ENCODE measurements at regions of chr4 and their contacts with region 1.

Region 1: GRCh38 chr4:161629694-161630441 is 533.9 kb downstream of the FSTL5 start:
- DNase-seq: no peak
- H3K4me3 ChIP-seq: no peak overlapping the region
- H3K27ac ChIP-seq: no peak overlapping the region
- H3K4me1 ChIP-seq: no peaks in the 10 kb centered on the region
- H3K27me3 ChIP-seq: no peaks in the 10 kb centered on the region
- CTCF ChIP-seq: no peak

Region 2: DNA sequence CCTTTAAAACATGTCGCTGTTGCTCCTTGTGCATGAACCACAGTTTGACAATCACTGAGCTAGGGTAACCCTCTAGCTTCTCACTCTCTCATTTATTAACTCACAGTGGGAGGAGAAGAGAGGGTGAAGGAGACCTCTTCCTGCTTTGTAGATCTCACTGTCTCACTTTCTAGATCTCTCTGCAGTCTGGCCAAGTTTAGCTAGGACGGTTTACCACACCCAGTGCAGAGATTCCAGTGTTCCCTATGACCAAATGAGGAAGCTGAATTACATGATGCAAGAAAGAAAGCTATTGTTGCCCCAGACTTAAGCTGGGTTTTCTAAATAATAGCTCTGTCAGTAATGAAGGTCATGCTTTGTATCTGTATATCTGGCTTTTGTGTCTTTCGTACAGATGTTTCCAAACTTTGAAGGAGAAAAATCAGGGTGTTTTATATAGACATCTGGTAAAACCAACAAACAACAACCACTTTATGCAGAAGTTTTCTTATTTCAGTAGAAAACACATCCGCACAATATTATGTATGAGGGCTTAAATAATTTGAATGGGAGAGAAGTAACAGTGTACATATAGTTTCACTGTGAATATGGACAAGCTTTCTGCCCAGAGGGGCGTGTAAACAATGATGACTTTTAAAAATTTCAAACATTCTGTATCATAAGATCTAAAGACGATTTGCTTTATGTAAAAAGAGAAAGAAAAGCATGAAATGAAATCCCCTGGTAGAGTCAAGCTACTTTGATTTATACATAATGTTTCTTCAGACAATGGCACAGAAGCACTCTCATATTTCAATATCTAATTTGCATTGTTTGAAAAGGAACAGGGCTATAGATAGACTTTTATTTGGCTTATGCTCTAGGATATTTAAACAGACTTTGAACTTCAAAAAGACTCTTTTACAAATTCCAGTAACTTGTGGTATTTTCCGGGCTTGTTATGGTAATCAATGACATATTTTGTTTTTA is 48.3 kb before region 1 on chr4:
- CTCF ChIA-PET with region 1: no interaction called
- POLR2A ChIA-PET with region 1: no interaction called
- intact Hi-C with region 1: no loop called
- DNase-seq: no peak
- H3K4me3 ChIP-seq: no peak overlapping the region
- H3K27ac ChIP-seq: no peak overlapping the region
- H3K4me1 ChIP-seq: no peaks in the 10 kb centered on the region
- H3K27me3 ChIP-seq: no peaks in the 10 kb centered on the region
- CTCF ChIP-seq: no peak

Region 3: GRCh38 chr4:163494360-163495162 is 1864.7 kb after region 1 on chr4 and contains the start of gene TMA16:
- CTCF ChIA-PET with region 1: no interaction called
- POLR2A ChIA-PET with region 1: interaction called, 10 read pairs
- intact Hi-C with region 1: no loop called
- DNase-seq: peak; percentile 77 to 83
- H3K4me3 ChIP-seq: peak within 1 kb of the TSS; percentile 76
- H3K27ac ChIP-seq: peak within 1 kb of the TSS; percentile 93
- H3K4me1 ChIP-seq: no peaks in the 10 kb centered on the region; the same call in 1 of the 2 replicates
- H3K27me3 ChIP-seq: no peaks in the 10 kb centered on the region
- CTCF ChIP-seq: no peak
- total RNA-seq, gene TMA16: 34.5 and 36.8 TPM in 2 replicates

Measured in PC-9 (cell line).